PC-3 (cell line): ENCODE measurements at regions of chr10 and their contacts with region 1.

Region 1: DNA sequence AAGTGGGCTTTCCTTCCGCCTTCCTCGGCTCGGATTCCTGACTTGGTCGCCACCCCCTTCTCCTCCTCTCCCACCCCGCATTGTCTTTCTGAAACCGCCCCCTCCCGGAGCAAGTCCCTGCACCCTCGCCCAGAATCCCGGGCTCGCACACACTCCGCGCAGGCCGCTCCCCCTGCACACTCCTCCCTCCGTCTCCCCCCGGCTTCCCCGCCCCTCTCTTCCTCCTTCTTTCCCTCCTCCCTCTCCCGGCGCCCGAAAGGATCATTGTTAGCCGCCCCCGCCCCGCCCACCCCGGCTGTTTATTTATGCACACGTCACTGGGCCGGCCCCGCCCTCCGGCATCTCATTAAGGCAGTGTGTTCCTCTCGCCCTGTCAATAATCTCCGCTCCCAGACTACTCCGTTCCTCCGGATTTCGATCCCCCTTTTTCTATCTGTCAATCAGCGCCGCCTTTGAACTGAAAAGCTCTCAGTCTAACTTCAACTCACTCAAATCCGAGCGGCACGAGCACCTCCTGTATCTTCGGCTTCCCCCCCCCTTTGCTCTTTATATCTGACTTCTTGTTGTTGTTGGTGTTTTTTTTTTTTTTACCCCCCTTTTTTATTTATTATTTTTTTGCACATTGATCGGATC is at the start of gene TCF7L2:
- DNase-seq: peak; percentile 93
- ATAC-seq: peak; percentile 68
- H3K4me3 ChIP-seq: peak within 1 kb of the TSS; percentile 95
- H3K27ac ChIP-seq: peak within 1 kb of the TSS; percentile 72
- H3K4me1 ChIP-seq: peaks cover 19% of the 10 kb centered on the region
- H3K27me3 ChIP-seq: no peaks in the 10 kb centered on the region
- CTCF ChIP-seq: no peak
- total RNA-seq, gene TCF7L2: 14.3 and 16.1 TPM in 2 replicates

Region 2: DNA sequence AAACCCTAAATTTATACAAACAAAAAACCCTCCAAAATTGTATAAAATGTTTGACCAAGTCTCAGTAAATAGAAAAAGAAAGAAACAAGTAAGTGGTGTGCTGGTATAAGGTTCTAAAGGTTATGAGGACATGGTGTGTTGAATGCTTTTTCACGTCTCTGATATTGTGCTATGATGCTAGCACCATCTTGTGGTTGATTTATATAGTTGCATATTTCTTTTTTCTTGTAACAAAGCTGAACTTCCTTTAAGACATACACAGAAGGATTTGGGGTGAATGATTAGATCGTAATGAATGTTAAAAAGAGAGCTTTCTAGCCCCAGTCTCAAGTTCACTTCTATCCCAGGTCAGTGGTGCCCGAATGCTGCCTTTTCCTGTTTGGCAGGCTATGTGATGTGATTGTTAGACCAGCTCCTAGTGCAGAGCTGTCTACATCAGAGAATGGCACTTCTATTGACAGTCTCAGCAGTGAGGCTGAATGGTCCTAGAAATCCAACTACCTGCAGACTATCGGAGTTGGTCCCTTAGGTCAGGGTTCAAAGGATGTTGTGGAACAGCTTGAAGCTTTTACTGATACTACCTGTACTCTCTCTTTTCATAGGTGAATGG is 478.0 kb before region 1 on chr10:
- CTCF ChIA-PET with region 1: no interaction called
- POLR2A ChIA-PET with region 1: no interaction called
- intact Hi-C with region 1: loop called (anchors 5 kb)
- DNase-seq: peak; percentile 48
- ATAC-seq: peak; percentile 57
- H3K4me3 ChIP-seq: no peak overlapping the region
- H3K27ac ChIP-seq: no peak overlapping the region
- H3K4me1 ChIP-seq: 0 out of 2 replicates have a peak, but pooled peaks cover 7% of the 10 kb centered on the region
- H3K27me3 ChIP-seq: no peaks in the 10 kb centered on the region
- CTCF ChIP-seq: peak; percentile 80

Region 3: GRCh38 chr10:112721080-112721698 is 228.8 kb before region 1 on chr10:
- CTCF ChIA-PET with region 1: no interaction called
- POLR2A ChIA-PET with region 1: interaction called, 8 read pairs
- intact Hi-C with region 1: loop called (anchors 1 kb)
- DNase-seq: peak; percentile 69
- ATAC-seq: peak; percentile 37; the same call in 1 of the 2 replicates
- H3K4me3 ChIP-seq: no peak overlapping the region
- H3K27ac ChIP-seq: no peak overlapping the region
- H3K4me1 ChIP-seq: peaks cover 18% of the 10 kb centered on the region
- H3K27me3 ChIP-seq: no peaks in the 10 kb centered on the region
- CTCF ChIP-seq: peak; percentile 69

Region 4: GRCh38 chr10:112915590-112916572 is 34.1 kb before region 1 on chr10:
- CTCF ChIA-PET with region 1: no interaction called
- POLR2A ChIA-PET with region 1: no interaction called
- intact Hi-C with region 1: loop called (anchors 2 kb)
- DNase-seq: peak; percentile 85
- ATAC-seq: peak; percentile 76
- H3K4me3 ChIP-seq: peak overlapping the region; percentile 57
- H3K27ac ChIP-seq: peak overlapping the region; percentile 93
- H3K4me1 ChIP-seq: peaks cover 56% of the 10 kb centered on the region
- H3K27me3 ChIP-seq: no peaks in the 10 kb centered on the region
- CTCF ChIP-seq: no peak

Region 5: GRCh38 chr10:112938808-112939482 is 11.0 kb before region 1 on chr10:
- CTCF ChIA-PET with region 1: no interaction called
- POLR2A ChIA-PET with region 1: no interaction called
- intact Hi-C with region 1: no loop called
- DNase-seq: no peak
- ATAC-seq: no peak
- H3K4me3 ChIP-seq: no peak overlapping the region
- H3K27ac ChIP-seq: no peak overlapping the region
- H3K4me1 ChIP-seq: no peaks in the 10 kb centered on the region
- H3K27me3 ChIP-seq: no peaks in the 10 kb centered on the region
- CTCF ChIP-seq: no peak

Region 6: DNA sequence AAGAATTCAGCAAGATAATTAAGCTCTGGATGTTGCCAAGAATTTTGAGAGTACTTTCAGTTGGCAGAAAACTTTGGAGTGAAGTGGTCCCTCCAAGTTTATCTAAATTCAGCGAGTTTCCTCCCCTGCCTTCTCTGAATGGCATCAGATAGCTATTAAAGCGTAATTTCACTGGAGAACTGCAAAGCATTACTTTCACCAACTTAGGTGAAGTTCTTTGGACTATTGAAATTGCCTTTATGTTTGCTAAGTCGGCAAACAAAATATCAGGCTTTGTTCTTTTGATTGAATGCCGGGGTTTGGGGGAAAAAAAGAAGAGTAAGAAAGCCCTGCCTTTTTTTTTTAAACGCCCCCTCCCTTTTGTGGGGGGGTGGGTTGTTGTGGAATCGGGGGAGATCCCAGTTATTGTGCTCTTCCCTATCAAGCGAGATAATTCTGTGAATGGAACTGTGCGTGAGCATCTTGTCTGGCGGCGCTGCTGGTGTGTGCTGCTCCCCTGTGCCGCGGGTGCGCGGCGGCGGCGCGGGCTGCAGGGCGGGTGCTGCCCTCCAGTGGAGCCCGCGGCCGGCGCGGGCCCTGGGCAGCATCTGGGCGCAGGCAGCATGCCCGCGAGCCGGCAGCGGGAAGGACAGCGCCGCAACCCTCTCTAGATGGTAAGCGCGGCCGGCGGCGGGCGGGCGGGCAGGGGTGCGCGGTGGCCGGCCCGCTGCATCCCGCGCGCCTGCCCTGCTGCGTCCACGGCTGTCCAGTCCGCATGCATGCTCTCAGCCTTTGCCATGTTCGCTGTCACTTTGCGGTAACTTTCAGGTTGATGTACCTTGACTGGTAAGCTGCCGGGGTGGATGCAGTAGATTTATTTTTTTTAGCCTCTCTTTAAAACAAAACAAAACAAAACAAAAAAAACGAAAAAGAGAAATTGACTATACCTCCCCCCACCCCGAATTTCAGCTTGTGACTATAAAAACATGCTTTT is 176.5 kb after region 1 on chr10:
- CTCF ChIA-PET with region 1: no interaction called
- POLR2A ChIA-PET with region 1: no interaction called
- intact Hi-C with region 1: loop called (anchors 1 kb)
- DNase-seq: peak; percentile 73
- ATAC-seq: peak; percentile 99
- H3K4me3 ChIP-seq: peak overlapping the region; percentile 63
- H3K27ac ChIP-seq: no peak overlapping the region
- H3K4me1 ChIP-seq: peaks cover 13% of the 10 kb centered on the region
- H3K27me3 ChIP-seq: no peaks in the 10 kb centered on the region
- CTCF ChIP-seq: peak; percentile 61

Region 7: GRCh38 chr10:113454341-113455061 is 504.5 kb after region 1 on chr10:
- CTCF ChIA-PET with region 1: no interaction called
- POLR2A ChIA-PET with region 1: no interaction called
- intact Hi-C with region 1: no loop called
- DNase-seq: peak; percentile 45
- ATAC-seq: peak; percentile 78
- H3K4me3 ChIP-seq: no peak overlapping the region
- H3K27ac ChIP-seq: no peak overlapping the region
- H3K4me1 ChIP-seq: peaks cover 4% of the 10 kb centered on the region; the same call in 1 of the 2 replicates
- H3K27me3 ChIP-seq: no peaks in the 10 kb centered on the region
- CTCF ChIP-seq: peak; percentile 82